Activated naive CD4-positive, alpha-beta T cell treated with anti-CD3 and anti-CD28 coated beads, Interleukin-2, amount 10 ng/mL, durations not matched to agents 7 days and 5 days (primary cell): ENCODE measurements at regions of chr10 and their contacts with region 1.

Region 1: GRCh38 chr10:120735773-120736371 is 115.3 kb upstream of the WDR11 start:
- DNase-seq: no peak
- H3K4me3 Mint-ChIP-seq: no peak overlapping the region
- H3K27ac Mint-ChIP-seq: no peak overlapping the region
- H3K4me1 Mint-ChIP-seq: no peaks in the 10 kb centered on the region
- H3K27me3 Mint-ChIP-seq: no peaks in the 10 kb centered on the region

Region 2: DNA sequence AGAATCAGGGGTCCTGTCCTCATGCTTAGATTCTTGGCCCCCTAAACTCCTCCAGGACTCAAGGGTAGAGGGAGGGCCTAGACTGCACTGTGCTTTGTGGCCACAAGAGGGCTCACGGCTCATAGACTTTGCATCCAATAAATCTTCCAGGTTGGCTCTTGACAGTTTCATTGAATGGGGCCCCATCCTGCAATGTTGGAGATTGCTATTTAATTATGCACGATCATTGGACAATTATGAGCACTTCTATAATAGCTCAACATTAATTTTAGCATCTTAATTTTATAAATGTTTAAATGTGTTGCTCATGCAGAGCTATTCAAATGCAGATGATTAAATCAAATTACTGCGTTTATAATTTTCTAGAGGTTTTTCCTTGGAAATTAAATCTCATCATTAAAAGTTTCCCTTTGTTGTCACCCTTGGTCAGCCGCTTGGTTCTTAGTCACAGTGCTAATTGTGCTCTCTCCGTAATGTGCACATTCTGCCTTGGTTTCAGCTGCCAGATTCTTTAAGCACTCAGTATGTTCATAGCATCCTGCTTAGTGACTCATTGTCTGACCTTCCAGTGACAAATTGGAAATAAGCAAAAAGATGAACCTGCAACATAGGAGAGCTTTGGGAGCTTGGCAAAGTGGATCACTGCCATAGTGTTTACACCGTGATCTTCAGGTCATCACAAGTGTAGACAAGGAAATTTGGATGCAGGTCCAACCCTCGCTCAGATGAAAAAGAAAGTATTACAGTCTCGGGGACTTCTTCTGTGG is 312.3 kb before region 1 on chr10:
- CTCF ChIA-PET with region 1: interaction called, 22 read pairs
- DNase-seq: peak; percentile 42
- H3K4me3 Mint-ChIP-seq: no peak overlapping the region
- H3K27ac Mint-ChIP-seq: no peak overlapping the region
- H3K4me1 Mint-ChIP-seq: no peaks in the 10 kb centered on the region
- H3K27me3 Mint-ChIP-seq: no peaks in the 10 kb centered on the region

Region 3: GRCh38 chr10:120562956-120563355 is 172.9 kb before region 1 on chr10:
- CTCF ChIA-PET with region 1: no interaction called
- DNase-seq: no peak
- H3K4me3 Mint-ChIP-seq: no peak overlapping the region
- H3K27ac Mint-ChIP-seq: no peak overlapping the region
- H3K4me1 Mint-ChIP-seq: no peaks in the 10 kb centered on the region
- H3K27me3 Mint-ChIP-seq: no peaks in the 10 kb centered on the region

Region 4: DNA sequence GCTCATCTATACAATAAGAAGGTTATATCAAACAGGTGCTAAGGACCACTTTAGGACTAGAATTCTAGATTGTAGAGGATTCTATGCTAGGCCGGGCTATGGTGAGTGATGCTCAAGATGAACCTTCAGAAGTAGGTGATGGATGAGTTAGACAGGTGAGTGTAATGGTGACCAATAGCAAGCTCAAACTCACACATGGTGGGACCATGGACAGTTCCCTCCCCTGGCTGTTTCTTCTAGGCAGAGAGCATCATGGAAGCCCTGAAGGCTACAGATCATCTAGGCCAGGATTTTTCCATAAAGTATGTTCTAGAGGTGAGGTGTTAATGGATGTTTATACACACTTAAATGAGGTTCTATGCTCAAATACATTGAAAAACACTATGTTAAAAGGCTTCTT is 46.9 kb before region 1 on chr10:
- CTCF ChIA-PET with region 1: no interaction called
- DNase-seq: no peak
- H3K4me3 Mint-ChIP-seq: no peak overlapping the region
- H3K27ac Mint-ChIP-seq: no peak overlapping the region
- H3K4me1 Mint-ChIP-seq: peaks cover 3% of the 10 kb centered on the region
- H3K27me3 Mint-ChIP-seq: no peaks in the 10 kb centered on the region